ENCODE measurements at regions of chr5 and their contacts with region 1.

Region 1: GRCh38 chr5:180868960-180869359 is 7.9 kb upstream of the ZFP62 start:
- DNase-seq: peak; percentile 86
- H3K4me3 Mint-ChIP-seq: no peak overlapping the region
- H3K27ac Mint-ChIP-seq: no peak overlapping the region
- H3K4me1 Mint-ChIP-seq: peaks cover 2% of the 10 kb centered on the region
- H3K27me3 Mint-ChIP-seq: peaks cover 3% of the 10 kb centered on the region

Region 2: GRCh38 chr5:180784497-180785097 is 84.4 kb before region 1 on chr5:
- CTCF ChIA-PET with region 1: interaction called, 11 read pairs
- POLR2A ChIA-PET with region 1: no interaction called
- intact Hi-C with region 1: loop called (anchors 2 kb)
- DNase-seq: peak; percentile 83
- H3K4me3 Mint-ChIP-seq: no peak overlapping the region
- H3K27ac Mint-ChIP-seq: no peak overlapping the region
- H3K4me1 Mint-ChIP-seq: peaks cover 10% of the 10 kb centered on the region
- H3K27me3 Mint-ChIP-seq: no peaks in the 10 kb centered on the region